Esophagus muscularis mucosa (tissue), 4 donors: ENCODE measurements at regions of chr15 and their contacts with region 1.

Region 1: GRCh38 chr15:66386204-66387123 is at the start of gene MAP2K1:
- DNase-seq: peak; percentile 99
- H3K4me3 ChIP-seq: peak within 1 kb of the TSS; percentile 83 to 97 (median 94)
- H3K27ac ChIP-seq: peak within 1 kb of the TSS; percentile 92 to 99 (median 98)
- H3K4me1 ChIP-seq: peaks cover 32 to 45% (median 43%) of the 10 kb centered on the region in 4 donors
- H3K27me3 ChIP-seq: no peaks in the 10 kb centered on the region
- CTCF ChIP-seq: peak; percentile 69 to 83 (median 71)
- EP300 ChIP-seq: no peak
- POLR2A ChIP-seq: peak; percentile 43
- total RNA-seq, gene MAP2K1: 29.5 to 37.6 (median 35.9) TPM

Region 2: DNA sequence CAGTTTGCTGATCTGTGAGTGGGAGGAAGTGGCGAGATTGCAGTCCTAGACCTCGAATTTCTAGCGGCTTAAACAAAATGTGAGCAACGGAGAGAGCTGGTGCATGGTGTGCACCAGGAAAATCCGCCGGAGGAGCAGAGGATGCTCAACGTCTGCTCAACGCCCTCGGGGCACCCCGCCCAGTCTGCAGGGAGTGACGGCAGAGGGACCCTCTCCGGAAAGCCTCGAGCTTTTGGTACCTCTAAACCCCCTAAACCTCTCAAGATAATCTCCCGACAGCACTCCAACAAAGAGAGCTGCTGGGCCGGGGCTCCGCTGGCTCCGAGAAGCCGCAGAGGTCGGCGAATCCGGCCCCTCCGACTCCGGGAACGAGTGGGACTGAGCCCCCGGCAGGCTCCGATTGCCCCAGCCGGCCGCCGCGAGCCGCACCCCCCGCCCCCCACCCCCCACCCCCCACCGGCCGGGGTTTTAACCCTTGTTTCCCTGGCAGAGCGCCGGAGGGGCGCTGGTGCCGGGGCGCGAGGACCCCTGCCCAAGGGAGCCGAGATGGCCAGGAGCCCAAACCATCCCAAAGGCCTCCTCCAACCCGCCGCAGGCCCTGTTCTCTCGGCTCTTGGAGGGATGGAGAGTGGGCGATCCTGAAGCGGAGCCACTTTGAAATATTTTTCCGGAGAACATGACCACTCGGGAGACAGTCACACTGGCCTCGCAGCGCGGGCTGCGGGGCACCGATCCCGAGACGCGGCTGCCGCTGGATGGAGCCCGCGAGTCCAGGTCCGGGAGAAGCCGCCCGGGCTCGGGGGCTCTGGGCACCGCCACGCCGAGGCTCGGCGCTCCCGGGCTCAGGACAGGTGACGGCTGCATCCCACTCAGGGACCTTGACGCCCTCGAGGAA is 134.4 kb before region 1 on chr15:
- intact Hi-C with region 1: no loop called
- DNase-seq: no peak
- H3K4me3 ChIP-seq: peak overlapping the region; percentile 57 to 67 (median 64)
- H3K27ac ChIP-seq: no peak overlapping the region
- H3K4me1 ChIP-seq: peaks cover 27 to 35% (median 33%) of the 10 kb centered on the region in 4 donors
- H3K27me3 ChIP-seq: peaks cover 0 to 79% (median 38%) of the 10 kb centered on the region in 4 donors
- CTCF ChIP-seq: peak; percentile 38 to 80 (median 47)
- EP300 ChIP-seq: no peak
- POLR2A ChIP-seq: no peak

Region 3: GRCh38 chr15:66278056-66278455 is 108.4 kb before region 1 on chr15:
- intact Hi-C with region 1: no loop called
- DNase-seq: no peak
- H3K4me3 ChIP-seq: no peak overlapping the region
- H3K27ac ChIP-seq: no peak overlapping the region
- H3K4me1 ChIP-seq: no peaks in the 10 kb centered on the region
- H3K27me3 ChIP-seq: no peaks in the 10 kb centered on the region
- CTCF ChIP-seq: no peak
- EP300 ChIP-seq: no peak
- POLR2A ChIP-seq: no peak

Region 4: GRCh38 chr15:66293419-66294156 is 92.9 kb before region 1 on chr15 and contains the start of gene DIS3L:
- intact Hi-C with region 1: no loop called
- DNase-seq: no peak
- H3K4me3 ChIP-seq: peak within 1 kb of the TSS; percentile 65 to 83 (median 72)
- H3K27ac ChIP-seq: peak within 1 kb of the TSS; percentile 91 to 94 (median 92)
- H3K4me1 ChIP-seq: peaks cover 23 to 59% (median 43%) of the 10 kb centered on the region in 4 donors
- H3K27me3 ChIP-seq: no peaks in the 10 kb centered on the region
- CTCF ChIP-seq: no peak
- EP300 ChIP-seq: no peak
- POLR2A ChIP-seq: no peak
- total RNA-seq, gene DIS3L: 33.3 to 47.9 (median 34.8) TPM

Region 5: GRCh38 chr15:66356345-66357236 is 29.9 kb before region 1 on chr15 and contains the start of gene TIPIN:
- intact Hi-C with region 1: loop called (anchors 2 kb)
- DNase-seq: peak; percentile 97
- H3K4me3 ChIP-seq: peak within 1 kb of the TSS; percentile 70 to 84 (median 70)
- H3K27ac ChIP-seq: peak within 1 kb of the TSS; percentile 81 to 88 (median 84)
- H3K4me1 ChIP-seq: peaks cover 4 to 15% (median 9%) of the 10 kb centered on the region in 4 donors
- H3K27me3 ChIP-seq: no peaks in the 10 kb centered on the region
- CTCF ChIP-seq: no peak
- EP300 ChIP-seq: no peak
- POLR2A ChIP-seq: no peak
- total RNA-seq, gene TIPIN: 2.9 to 5.3 (median 3.8) TPM

Region 6: GRCh38 chr15:66462627-66463026 is 76.2 kb after region 1 on chr15:
- intact Hi-C with region 1: no loop called
- DNase-seq: no peak
- H3K4me3 ChIP-seq: no peak overlapping the region
- H3K27ac ChIP-seq: no peak overlapping the region
- H3K4me1 ChIP-seq: no peaks in the 10 kb centered on the region
- H3K27me3 ChIP-seq: no peaks in the 10 kb centered on the region
- CTCF ChIP-seq: no peak
- EP300 ChIP-seq: no peak
- POLR2A ChIP-seq: no peak

Region 7: DNA sequence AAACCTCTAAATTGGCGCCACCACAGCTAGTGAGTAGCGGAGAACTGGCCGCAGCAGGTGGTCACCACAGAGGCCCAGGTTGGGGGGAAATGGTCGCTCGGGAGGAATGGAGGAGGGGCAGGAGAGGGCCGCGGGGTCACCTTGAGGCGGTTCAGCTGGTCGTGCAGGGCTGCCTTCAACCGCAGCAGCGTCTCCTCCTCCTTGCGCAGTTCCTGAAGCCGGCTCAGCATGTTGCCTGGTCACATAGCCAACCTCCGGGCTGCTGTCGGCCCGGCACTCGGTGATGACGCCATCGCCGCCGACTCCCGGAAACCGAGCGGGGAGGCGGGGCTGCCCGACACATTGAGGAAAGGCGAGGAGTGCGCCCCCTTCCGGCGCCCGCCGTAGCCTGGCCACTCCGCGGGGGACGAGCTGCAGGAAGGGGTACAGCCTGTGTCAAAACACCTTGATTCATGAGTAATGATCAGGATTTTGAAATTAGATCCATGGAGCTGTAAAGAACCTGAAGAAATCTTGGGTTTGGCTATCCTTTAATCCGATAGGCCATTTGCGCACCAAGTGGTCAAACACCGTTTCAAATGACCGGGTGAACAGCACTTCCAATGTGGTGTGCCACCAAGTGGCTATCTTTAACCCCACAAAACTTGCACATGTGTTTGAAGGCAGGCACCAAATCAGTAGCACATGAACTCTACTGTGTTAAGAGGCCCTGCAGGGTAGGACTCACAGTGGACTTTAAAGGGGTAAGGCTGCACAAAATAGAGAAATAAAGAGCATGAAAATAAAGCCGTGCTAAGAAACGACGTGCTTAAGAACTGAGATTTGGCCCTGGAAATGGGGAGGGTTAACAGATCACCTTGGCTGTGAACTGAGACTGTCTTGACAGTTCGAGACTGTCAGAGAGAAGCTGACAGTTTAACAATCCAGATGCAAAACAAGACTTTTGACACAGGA is 111.3 kb after region 1 on chr15 and contains the start of gene SNAPC5:
- intact Hi-C with region 1: loop called (anchors 2 kb)
- DNase-seq: peak; percentile 99
- H3K4me3 ChIP-seq: peak within 1 kb of the TSS; percentile 62 to 93 (median 88)
- H3K27ac ChIP-seq: peak within 1 kb of the TSS; percentile 83 to 92 (median 87)
- H3K4me1 ChIP-seq: peaks cover 17 to 41% (median 31%) of the 10 kb centered on the region in 4 donors
- H3K27me3 ChIP-seq: no peaks in the 10 kb centered on the region
- CTCF ChIP-seq: peak; percentile 96 to 98 (median 97)
- EP300 ChIP-seq: no peak
- POLR2A ChIP-seq: peak; percentile 65
- total RNA-seq, gene SNAPC5: 23.3 to 44.9 (median 34.7) TPM

Region 8: GRCh38 chr15:66504563-66505429 is 118.3 kb after region 1 on chr15 and contains the starts of genes RPL4 and ZWILCH:
- intact Hi-C with region 1: loop called (anchors 2 kb)
- DNase-seq: peak; percentile 94
- H3K4me3 ChIP-seq: peak within 1 kb of the TSS; percentile 83 to 96 (median 89)
- H3K27ac ChIP-seq: peak within 1 kb of the TSS; percentile 89 to 91 (median 90)
- H3K4me1 ChIP-seq: peaks cover 24 to 33% (median 30%) of the 10 kb centered on the region in 4 donors
- H3K27me3 ChIP-seq: no peaks in the 10 kb centered on the region
- CTCF ChIP-seq: peak in 1 of 3 experiments; percentile 24
- EP300 ChIP-seq: no peak
- POLR2A ChIP-seq: peak; percentile 97
- total RNA-seq, gene RPL4: 2,782 to 4,577 (median 3,551) TPM
- total RNA-seq, gene ZWILCH: 2.1 to 3.3 (median 2.4) TPM